MCF 10A (cell line): ENCODE measurements at regions of chr2 and their contacts with region 1.

Region 1: DNA sequence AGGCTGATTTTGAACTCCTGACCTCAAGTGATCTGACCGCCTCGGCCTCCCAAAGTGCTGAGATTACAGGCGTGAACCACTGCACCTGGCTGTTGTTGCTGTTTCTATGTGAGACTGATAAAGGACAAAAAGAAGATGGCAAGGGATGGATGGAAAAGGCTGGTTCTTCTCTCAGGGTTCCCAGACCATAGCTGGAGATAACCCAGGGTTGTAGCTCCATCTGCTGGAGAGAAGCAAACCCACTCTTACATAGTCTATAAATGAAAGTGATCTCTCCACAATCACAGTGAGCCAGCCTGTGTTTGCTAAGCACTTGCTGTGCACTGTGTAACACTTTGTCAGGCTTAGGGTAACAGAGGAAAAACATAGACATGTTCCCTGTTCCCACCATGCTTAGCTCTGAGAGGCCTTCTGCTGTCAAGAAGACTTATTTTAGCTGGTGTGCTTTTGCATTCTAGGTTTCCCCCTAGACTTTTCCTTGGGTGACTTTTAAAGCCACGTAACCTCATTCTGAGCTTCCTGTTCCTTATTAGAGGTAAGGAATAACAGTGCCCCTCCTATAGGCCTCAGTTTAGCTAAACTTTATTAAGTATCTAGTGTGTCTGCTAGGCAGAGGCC is 49.7 kb downstream of the LIMS1 start:
- DNase-seq: peak; percentile 83
- H3K4me3 Mint-ChIP-seq: no peak overlapping the region
- H3K27ac Mint-ChIP-seq: peak overlapping the region; percentile 20
- H3K4me1 Mint-ChIP-seq: peaks cover 52% of the 10 kb centered on the region
- H3K27me3 Mint-ChIP-seq: no peaks in the 10 kb centered on the region
- CTCF ChIP-seq: peak; percentile 61

Region 2: DNA sequence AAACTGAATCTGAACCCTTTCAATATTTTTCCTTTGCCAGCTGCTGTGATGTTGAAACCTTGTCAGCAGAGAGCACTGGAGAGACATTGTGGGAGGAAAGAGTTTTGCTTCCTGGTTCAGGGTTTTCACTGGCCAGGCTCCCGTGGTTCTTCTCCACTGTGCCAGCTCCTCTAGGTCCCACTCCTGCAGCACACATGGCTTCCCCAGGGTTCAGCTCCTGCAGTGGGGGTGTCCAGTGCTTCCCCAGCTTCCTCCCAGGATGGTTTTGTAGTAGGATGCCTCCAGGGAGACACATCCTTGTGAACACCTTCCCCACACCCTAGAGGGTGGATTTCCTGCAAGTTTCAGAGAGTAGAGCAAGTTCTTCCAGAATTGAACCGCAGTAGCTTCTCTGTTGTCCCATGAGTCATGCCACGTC is 368.2 kb before region 1 on chr2:
- CTCF ChIA-PET with region 1: no interaction called
- POLR2A ChIA-PET with region 1: no interaction called
- intact Hi-C with region 1: loop called (anchors 5 kb)
- DNase-seq: peak; percentile 47
- H3K4me3 Mint-ChIP-seq: no peak overlapping the region
- H3K27ac Mint-ChIP-seq: no peak overlapping the region
- H3K4me1 Mint-ChIP-seq: no peaks in the 10 kb centered on the region
- H3K27me3 Mint-ChIP-seq: no peaks in the 10 kb centered on the region
- CTCF ChIP-seq: peak; percentile 20

Region 3: DNA sequence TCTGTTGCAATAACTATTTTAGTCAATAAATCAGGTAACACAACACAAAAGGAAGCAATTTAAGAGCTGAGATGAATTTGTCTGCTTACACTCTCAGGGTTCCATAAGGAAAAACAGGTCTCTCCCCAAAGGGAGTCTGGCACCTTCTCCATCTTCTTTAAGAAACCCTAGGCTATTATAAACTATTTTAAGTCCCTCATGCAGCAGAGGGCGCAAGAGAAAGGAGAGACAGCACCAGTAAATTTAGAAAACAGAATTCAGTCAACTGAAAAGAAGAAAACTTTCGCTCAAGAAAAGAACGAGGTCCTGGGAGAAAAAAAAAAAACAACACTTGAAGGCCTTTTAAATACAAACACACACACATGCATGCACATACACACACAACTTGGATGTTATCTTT is 187.2 kb before region 1 on chr2:
- CTCF ChIA-PET with region 1: interaction called, 35 read pairs
- POLR2A ChIA-PET with region 1: interaction called, 5 read pairs
- intact Hi-C with region 1: loop called (anchors 1 kb)
- DNase-seq: peak; percentile 76
- H3K4me3 Mint-ChIP-seq: no peak overlapping the region
- H3K27ac Mint-ChIP-seq: no peak overlapping the region
- H3K4me1 Mint-ChIP-seq: peaks cover 7% of the 10 kb centered on the region
- H3K27me3 Mint-ChIP-seq: no peaks in the 10 kb centered on the region
- CTCF ChIP-seq: peak; percentile 32

Region 4: DNA sequence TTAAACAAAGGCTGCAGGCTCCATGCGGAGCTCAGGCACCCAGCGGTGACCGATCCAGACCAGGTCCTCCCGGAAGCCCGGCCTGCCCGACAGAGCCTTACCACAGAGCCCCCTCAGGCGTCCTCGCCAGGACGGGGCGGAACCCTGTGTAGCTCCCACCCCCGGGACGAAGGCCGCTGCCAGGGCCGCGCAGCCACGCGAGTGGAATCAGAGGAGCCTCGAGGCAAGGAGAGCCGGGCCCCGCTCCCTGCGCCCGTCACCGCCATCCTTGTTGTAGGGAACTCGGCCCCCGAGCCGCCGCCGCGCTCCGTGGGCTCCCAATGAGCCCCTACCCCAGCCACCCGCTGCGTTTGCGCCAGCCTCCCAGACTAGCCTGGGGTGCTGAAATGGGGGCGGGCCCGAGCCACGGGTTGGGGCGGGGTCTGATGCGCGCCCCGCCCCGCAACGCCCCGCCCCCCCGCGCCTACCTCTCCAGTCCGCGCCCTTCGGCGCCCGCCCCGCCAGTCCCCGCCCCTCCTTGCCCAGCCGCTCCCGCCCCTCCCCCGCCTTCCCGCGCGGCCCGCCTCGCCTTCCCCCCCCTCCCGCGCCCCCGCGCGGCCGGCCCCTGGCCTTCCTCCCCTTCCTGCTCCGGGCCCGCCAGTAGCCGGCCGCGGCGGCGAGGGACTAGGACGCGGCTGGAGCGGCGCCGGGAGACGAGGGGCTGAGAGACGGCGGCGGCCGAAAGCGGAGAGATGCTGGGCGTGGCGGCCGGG is 50.0 kb before region 1 on chr2 and contains the start of gene LIMS1:
- CTCF ChIA-PET with region 1: interaction called, 28 read pairs
- POLR2A ChIA-PET with region 1: interaction called, 263 read pairs
- intact Hi-C with region 1: loop called (anchors 1 kb)
- DNase-seq: peak; percentile 90
- H3K4me3 Mint-ChIP-seq: peak within 1 kb of the TSS; percentile 90
- H3K27ac Mint-ChIP-seq: peak within 1 kb of the TSS; percentile 83
- H3K4me1 Mint-ChIP-seq: peaks cover 34% of the 10 kb centered on the region
- H3K27me3 Mint-ChIP-seq: no peaks in the 10 kb centered on the region
- CTCF ChIP-seq: no peak
- total RNA-seq, gene LIMS1: 70.9 and 74.9 TPM in 2 replicates

Region 5: DNA sequence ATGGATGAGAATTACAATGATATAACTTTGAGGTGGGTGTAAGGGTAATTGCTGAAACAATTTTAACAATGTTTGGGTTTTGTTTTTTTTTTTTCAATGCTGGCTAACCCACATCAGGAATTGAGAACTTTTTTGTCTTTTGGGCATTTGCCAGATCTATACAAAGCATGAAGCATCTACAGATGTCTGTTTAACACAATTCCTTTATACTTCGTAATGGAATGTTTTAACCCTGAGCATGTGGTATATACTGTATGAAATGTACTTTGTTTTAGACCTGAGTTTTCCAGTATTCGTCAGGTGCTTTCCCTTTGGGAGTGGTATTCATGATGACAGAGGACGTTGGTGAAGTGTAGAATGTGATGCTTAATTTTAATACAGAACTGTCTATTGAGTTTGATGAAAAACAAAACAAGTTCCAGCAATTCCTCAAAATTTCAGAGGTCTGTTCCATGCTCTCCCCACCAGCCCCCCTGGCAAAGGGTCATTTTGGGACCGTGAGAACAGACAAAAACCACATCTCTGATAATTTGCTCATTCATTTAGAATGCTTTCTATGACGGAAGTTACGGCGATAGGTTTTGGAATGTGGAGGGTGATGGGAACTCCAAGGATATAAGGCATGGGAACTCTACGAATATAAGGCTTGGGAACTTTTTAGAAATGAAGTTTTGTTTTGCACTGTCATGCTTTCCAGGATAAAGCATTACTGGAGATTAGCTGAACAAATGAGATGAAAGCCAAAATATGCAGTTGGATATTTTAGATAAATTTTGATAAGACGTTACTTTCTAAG is 35.6 kb before region 1 on chr2:
- CTCF ChIA-PET with region 1: interaction called, 14 read pairs
- POLR2A ChIA-PET with region 1: no interaction called
- intact Hi-C with region 1: no loop called
- DNase-seq: no peak
- H3K4me3 Mint-ChIP-seq: no peak overlapping the region
- H3K27ac Mint-ChIP-seq: no peak overlapping the region
- H3K4me1 Mint-ChIP-seq: peaks cover 20% of the 10 kb centered on the region
- H3K27me3 Mint-ChIP-seq: no peaks in the 10 kb centered on the region
- CTCF ChIP-seq: no peak

Region 6: DNA sequence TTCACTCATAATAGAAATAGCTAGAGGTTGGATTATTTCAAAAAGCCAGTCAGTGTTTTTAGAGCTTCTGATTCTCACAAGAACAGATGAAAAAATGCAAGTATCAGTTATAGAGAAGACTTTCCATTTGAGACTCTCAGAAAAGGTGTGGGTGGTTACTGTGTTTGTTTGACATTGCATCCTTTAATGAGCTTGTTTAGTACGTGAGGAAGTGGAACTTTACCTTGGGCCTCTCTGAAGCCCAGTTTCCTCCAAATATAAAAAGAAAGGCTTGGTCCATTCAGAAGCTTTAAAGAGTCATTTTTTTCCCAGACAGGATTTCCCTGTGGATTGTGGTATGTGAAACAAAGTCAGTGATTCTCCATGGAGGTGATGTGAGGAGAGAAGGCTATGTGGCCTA is 45.4 kb after region 1 on chr2:
- CTCF ChIA-PET with region 1: interaction called, 111 read pairs
- POLR2A ChIA-PET with region 1: interaction called, 3 read pairs
- intact Hi-C with region 1: no loop called
- DNase-seq: no peak
- H3K4me3 Mint-ChIP-seq: no peak overlapping the region
- H3K27ac Mint-ChIP-seq: no peak overlapping the region
- H3K4me1 Mint-ChIP-seq: peaks cover 37% of the 10 kb centered on the region
- H3K27me3 Mint-ChIP-seq: no peaks in the 10 kb centered on the region
- CTCF ChIP-seq: no peak

Region 7: DNA sequence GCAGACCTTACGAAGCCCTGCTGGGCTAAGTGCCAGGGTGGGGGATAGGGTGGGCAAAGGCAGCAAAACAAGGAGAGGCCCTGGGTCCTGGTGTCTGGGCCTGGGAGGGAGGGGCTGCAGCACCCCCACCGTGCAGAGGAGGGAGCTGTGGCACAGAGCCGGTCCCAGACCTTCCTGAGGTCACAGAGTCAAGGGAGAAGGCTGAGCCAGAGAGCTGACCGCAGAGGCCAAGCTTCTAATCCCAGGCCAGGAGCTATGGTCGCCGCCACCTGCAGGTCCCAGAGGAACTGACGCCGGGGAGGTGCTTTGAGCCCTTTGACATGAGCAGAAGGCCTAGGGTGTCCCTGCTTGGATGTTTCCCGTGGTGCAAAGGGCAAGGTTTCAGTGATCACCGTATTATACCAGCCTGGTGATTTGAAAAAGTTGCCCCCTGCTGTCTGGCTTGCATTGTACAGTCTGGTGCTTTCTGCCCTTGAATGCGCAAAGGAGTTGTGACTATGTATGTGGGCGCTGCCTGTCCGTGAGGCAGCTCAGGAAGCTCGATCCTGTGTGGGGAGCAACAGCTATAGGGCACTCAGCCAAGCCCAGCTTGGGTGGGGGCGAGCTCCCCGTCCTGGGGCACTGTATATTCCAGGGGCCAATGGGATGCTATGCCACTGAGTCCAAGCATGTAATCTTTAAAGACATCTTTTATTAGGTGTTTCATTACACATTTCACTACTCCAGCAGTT is 360.8 kb after region 1 on chr2:
- CTCF ChIA-PET with region 1: no interaction called
- POLR2A ChIA-PET with region 1: no interaction called
- intact Hi-C with region 1: no loop called
- DNase-seq: no peak
- H3K4me3 Mint-ChIP-seq: no peak overlapping the region
- H3K27ac Mint-ChIP-seq: no peak overlapping the region
- H3K4me1 Mint-ChIP-seq: no peaks in the 10 kb centered on the region
- H3K27me3 Mint-ChIP-seq: no peaks in the 10 kb centered on the region
- CTCF ChIP-seq: no peak